ENCODE measurements at regions of chr18 and their contacts with region 1.

Region 1: DNA sequence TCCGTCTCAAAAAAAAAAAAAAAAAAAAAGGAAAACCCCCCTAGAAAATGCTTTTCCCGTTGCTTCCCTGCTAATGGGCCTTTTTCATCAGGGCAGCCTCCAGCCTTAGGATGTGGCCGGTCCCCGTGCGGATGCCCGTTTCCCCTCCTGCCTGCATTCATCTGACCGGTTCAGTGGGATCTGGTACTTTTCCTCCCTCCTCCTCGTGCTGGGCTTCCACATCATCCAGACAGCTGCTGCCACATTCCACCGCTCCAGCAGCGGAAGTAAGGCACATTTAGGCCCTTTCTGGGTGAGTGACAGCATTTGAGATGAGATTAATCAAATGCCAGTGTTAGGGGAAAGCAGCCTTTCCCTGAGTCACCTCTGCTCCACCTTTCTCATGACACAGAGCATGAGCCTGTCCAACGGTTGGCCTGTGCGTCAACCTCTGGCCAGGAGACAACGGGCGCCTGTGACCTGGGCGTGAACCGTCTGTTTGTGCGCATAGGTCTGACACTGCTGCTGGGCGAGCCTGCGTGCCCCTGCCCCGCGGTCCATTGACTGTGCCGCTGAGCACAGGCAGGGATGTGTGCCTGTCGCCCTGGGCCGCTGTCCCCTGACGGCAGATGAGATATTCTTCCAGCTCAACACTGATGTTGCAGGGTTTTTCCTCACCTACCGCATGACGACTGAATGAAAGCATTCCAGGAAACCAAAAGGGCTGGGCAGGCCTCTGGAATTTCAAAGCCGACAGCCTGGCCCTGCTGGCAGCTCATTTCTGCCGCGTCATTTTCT is 174.0 kb downstream of the TGIF1 start:
- DNase-seq: no peak
- H3K4me3 ChIP-seq: no peak overlapping the region
- H3K4me3 Mint-ChIP-seq: no peak overlapping the region
- H3K27ac ChIP-seq: no peak overlapping the region
- H3K27ac Mint-ChIP-seq: peak overlapping the region in 4 of 7 donors; percentile 38 to 85 (median 70)
- H3K4me1 ChIP-seq: peaks cover 19% of the 10 kb centered on the region
- H3K4me1 Mint-ChIP-seq: peaks cover 12 to 23% (median 16%) of the 10 kb centered on the region in 4 donors
- H3K27me3 ChIP-seq: no peaks in the 10 kb centered on the region
- H3K27me3 Mint-ChIP-seq: no peaks in the 10 kb centered on the region

Region 2: GRCh38 chr18:2843146-2843545 is 780.8 kb before region 1 on chr18:
- CTCF ChIA-PET with region 1: no interaction called
- POLR2A ChIA-PET with region 1: no interaction called
- intact Hi-C with region 1: no loop called
- DNase-seq: no peak
- H3K4me3 ChIP-seq: no peak overlapping the region
- H3K4me3 Mint-ChIP-seq: no peak overlapping the region
- H3K27ac ChIP-seq: no peak overlapping the region
- H3K27ac Mint-ChIP-seq: no peak overlapping the region
- H3K4me1 ChIP-seq: peaks cover 14% of the 10 kb centered on the region
- H3K4me1 Mint-ChIP-seq: peaks cover 9 to 14% (median 13%) of the 10 kb centered on the region in 4 donors
- H3K27me3 ChIP-seq: peaks cover 2% of the 10 kb centered on the region
- H3K27me3 Mint-ChIP-seq: peaks cover 9 to 12% of the 10 kb centered on the region in 2 donors

Region 3: GRCh38 chr18:3604498-3605408 is 19.2 kb before region 1 on chr18:
- CTCF ChIA-PET with region 1: no interaction called
- POLR2A ChIA-PET with region 1: interaction called, 6 read pairs
- intact Hi-C with region 1: loop called (anchors 2 kb)
- DNase-seq: peak; percentile 43 to 63 (median 56)
- H3K4me3 ChIP-seq: peak overlapping the region; percentile 44 to 54
- H3K4me3 Mint-ChIP-seq: no peak overlapping the region
- H3K27ac ChIP-seq: peak overlapping the region; percentile 67
- H3K27ac Mint-ChIP-seq: no peak overlapping the region
- H3K4me1 ChIP-seq: peaks cover 58% of the 10 kb centered on the region
- H3K4me1 Mint-ChIP-seq: peaks cover 8 to 15% (median 11%) of the 10 kb centered on the region in 4 donors
- H3K27me3 ChIP-seq: no peaks in the 10 kb centered on the region
- H3K27me3 Mint-ChIP-seq: no peaks in the 10 kb centered on the region

Measured in CD4-positive, alpha-beta memory T cell (primary cell).